Dorsolateral prefrontal cortex (tissue), 120 donors: ENCODE measurements at regions of chr12 and their contacts with region 1.

Region 1: DNA sequence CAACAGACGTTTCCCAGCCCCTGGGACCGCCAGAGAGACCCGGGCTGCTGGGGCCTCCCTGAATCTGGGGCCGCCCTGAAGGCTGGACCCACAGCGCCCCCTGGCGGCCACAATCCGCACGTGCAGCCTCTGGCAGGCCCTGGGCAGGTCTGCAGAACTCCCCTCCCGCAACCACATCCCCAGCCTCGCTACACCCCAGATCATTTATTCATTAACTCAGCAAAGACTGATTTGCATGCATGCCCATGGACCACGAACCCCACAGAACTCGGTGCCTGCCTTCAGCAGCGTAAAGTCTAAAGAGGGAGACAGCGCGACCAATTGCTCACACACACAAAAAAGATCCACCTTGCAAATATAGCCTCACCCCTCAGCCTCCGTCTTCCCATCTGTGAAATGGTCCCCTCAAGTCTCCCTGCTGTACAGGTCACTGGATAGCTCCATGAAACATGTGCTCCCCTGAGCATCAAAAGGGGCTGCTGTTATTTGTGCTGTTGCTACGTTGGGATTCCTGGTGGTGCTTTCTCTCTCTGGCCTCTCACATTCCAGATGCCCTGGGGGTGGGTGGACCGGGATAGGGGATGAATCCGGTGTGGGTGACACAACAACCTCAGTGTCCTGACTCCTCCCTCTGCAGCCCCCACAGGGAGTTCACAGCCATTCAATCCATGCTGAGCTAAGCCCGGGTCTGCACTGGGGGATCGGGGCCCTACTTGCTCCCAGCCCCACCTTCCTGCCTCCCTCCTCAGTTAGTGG is 96.4 kb downstream of the SCARB1 start:
- DNase-seq: peak; percentile 69 to 89 (median 84)
- H3K4me3 ChIP-seq: no peak overlapping the region
- H3K27ac ChIP-seq: peak overlapping the region in 41 of 59 donors; percentile 2 to 79 (median 43)
- H3K27me3 ChIP-seq: no peaks in the 10 kb centered on the region
- CTCF ChIP-seq: peak; percentile 99 to 100 (median 100)

Region 2: DNA sequence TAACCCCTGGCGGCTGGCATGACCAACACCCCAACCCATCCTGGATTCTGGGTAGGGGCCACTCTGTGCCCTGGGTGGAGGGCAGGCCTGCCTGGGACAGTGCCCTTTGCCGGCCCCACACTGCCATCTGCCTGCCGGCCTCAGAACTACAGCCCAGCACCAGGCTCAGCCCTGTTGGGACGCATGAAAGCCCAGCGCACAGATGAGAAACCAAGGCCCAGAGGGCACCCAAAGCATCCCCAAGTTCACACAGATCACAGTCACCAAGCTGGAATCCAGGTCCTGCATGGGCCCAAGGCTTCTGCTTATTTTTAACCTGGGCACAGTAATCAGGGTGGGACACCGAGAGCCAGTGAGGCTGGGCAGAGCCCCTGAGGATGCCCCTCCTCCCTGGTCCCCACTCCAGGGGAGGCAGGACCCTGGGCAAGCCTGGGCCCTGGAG is 446.2 kb before region 1 on chr12:
- intact Hi-C with region 1: loop called in 1 of 2 experiments (anchors 5 kb)
- DNase-seq: peak; percentile 64 to 86 (median 74)
- H3K4me3 ChIP-seq: no peak overlapping the region
- H3K27ac ChIP-seq: peak overlapping the region in 9 of 59 donors; percentile 4 to 66 (median 29)
- H3K27me3 ChIP-seq: no peaks in the 10 kb centered on the region
- CTCF ChIP-seq: peak; percentile 75 to 99 (median 98)

Region 3: DNA sequence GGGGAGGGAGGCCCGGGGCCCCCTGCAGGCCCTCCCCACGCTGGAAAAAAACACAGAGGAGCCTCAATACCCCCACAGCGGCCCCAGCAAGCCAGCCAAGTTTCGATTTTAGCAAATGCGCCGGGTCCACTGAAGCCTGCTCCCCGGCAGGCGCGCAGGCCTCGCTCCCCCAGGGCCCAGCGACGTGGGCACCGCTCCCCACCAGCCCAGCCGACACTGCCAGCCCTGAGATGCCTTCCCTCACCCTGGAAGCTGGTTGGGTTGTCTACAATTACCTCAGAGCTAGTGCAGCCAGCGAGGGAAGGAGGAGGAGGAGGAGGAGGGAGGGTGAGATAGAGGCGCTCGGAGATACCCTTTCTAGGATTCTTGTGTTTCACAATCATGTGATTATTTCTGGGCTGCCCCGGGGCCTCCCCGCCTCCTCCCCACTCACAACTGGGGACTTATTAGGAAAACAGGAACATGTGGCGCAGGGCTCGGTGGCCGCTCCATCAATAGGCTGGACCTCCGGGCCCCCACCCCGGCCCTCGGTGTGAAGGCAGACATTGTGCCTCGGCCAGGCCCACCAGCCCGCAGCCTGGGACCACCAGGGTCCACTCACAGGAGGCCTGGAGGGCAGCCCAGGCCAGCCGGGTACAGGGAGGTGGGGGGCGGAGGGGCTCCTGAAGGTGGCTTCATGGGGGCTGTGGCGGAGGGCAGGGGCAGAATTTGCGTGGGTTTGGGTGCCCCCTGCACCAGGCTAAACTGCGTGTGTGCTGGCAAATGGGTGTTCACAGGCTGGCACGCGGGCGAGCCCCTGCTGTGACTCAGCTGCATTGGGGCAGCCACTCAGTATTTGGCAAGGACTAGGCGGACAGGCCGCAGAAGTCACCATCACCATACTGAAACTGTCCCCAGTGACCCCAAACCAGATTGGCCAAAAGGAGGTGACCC is 309.7 kb before region 1 on chr12:
- intact Hi-C with region 1: loop called in 1 of 2 experiments (anchors 5 kb)
- DNase-seq: peak; percentile 51 to 88 (median 81)
- H3K4me3 ChIP-seq: peak overlapping the region; percentile 28 to 67 (median 52)
- H3K27ac ChIP-seq: peak overlapping the region; percentile 74 to 96 (median 91)
- H3K27me3 ChIP-seq: no peaks in the 10 kb centered on the region
- CTCF ChIP-seq: peak in 4 of 56 donors; percentile 11 to 25 (median 12)

Region 4: GRCh38 chr12:124512667-124513296 is 254.5 kb before region 1 on chr12:
- intact Hi-C with region 1: loop called in 1 of 2 experiments (anchors 5 kb)
- DNase-seq: peak in 8 of 10 donors; percentile 72 to 86 (median 81)
- H3K4me3 ChIP-seq: peak overlapping the region in 19 of 59 donors; percentile 2 to 37 (median 17)
- H3K27ac ChIP-seq: peak overlapping the region; percentile 46 to 100 (median 89)
- H3K27me3 ChIP-seq: no peaks in the 10 kb centered on the region
- CTCF ChIP-seq: peak in 1 of 56 donors; percentile 14

Region 5: DNA sequence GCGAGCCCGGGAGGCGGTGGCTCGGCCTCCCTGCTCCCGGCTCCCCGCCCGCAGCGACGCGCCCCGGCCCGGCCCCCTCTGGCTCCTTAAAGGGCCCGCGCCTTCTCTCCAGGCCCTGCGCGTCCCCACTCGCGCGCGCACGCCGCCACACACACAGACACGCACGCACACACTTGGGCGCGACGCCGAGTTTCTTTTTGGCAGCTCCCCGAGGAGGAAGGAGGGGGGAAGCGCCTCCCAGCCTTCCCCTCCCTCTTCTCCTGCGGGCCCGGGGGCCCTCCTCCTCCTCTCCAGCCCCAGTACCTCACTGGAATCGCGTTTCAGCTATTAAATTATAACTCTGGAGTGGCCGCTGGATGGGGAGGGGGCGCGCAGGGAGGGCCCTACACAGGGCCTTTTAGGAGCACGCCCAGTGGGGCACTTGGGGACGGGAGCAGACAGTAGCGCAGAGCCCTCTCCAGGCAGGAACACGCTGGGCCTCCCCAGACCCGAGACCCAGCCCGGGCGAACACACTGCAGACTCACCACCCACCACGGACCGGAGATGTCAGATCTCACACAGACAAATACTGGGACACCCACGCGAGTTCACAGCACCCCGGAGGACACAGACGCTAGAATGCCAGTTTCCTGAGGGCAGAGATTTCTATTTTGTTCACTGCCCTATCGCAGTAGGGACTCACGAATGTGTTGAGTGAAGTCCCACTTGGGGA is 199.4 kb before region 1 on chr12:
- intact Hi-C with region 1: loop called in 1 of 2 experiments (anchors 2 kb)
- DNase-seq: peak; percentile 82 to 94 (median 92)
- H3K4me3 ChIP-seq: peak overlapping the region; percentile 26 to 97 (median 51)
- H3K27ac ChIP-seq: peak overlapping the region; percentile 53 to 94 (median 87)
- H3K27me3 ChIP-seq: no peaks in the 10 kb centered on the region
- CTCF ChIP-seq: peak in 32 of 56 donors; percentile 3 to 48 (median 22)

Region 6: DNA sequence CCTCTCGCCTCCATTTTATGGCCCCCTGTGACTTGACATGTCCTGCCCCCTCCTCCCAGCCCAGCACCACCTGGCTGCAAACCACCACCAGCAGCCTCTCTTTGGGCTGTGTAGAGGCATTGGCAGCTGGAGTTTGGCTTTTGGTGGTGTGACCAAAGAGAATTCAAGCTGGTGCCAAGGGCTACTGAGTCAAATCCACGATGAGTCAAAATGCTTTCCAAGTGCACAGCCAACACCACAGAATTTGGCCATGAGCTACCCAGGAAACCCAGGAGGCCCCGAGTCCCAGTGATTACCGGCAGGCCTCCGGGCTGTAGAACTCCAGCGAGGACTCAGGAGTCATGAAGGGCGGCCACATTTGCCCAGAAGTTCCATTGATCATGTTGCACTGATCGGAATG is 42.6 kb after region 1 on chr12:
- intact Hi-C with region 1: no loop called
- DNase-seq: no peak
- H3K4me3 ChIP-seq: no peak overlapping the region
- H3K27ac ChIP-seq: peak overlapping the region in 16 of 59 donors; percentile 6 to 54 (median 33)
- H3K27me3 ChIP-seq: no peaks in the 10 kb centered on the region
- CTCF ChIP-seq: no peak

Region 7: GRCh38 chr12:124906606-124907261 is 139.5 kb after region 1 on chr12:
- intact Hi-C with region 1: loop called in 1 of 2 experiments (anchors 5 kb)
- DNase-seq: peak; percentile 46 to 97 (median 85)
- H3K4me3 ChIP-seq: peak overlapping the region in 1 of 59 donors; percentile 15
- H3K27ac ChIP-seq: peak overlapping the region in 54 of 59 donors; percentile 1 to 85 (median 72)
- H3K27me3 ChIP-seq: no peaks in the 10 kb centered on the region
- CTCF ChIP-seq: peak; percentile 96 to 100 (median 99)